Common myeloid progenitor, CD34-positive (primary cell): ENCODE measurements at regions of chr2 and their contacts with region 1.

Region 1: DNA sequence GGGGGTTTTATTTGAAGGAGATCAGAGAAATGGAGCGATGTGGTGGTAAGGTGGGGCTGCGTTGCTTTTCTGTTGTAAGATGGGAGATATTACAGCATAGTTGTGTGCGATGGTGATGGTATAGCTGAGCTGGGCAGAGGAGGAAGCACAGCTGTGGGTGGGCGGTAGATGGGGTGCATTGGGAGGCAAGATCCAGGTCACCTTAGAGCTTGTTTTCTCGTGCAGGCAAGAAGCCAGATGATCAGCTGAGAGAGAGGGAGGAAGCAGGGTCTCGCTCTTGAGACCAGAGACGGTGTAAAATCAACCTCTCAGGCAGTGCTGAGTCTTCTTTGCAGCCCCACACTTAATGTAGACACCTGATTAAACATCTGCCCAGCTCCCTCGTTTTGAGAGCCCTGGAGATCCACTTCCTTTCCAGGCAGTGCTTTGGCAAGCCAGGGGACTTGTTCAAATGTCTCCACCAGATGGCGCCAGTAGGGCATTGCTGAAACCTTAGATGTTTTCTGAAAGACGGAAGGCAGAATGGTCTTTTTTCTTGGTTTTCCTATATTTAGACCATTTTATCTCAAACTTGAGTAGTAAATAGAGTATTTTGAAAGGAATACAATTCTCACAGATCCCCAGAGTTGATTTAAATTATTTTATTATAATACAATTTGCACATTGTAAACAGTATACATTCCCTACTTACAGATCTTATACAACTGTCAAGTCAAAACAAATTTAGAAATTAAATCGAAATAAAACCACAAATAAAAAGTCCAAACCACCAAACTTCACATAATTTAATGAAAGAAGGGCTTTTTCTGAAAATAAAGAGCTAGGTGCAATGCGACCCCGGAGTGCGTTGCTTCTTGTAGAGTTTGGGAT is 21.1 kb upstream of the LYPD6B start:
- DNase-seq: peak; percentile 77 to 89 (median 83)
- H3K4me3 ChIP-seq: no peak overlapping the region
- H3K27ac ChIP-seq: no peak overlapping the region
- H3K4me1 ChIP-seq: peaks cover 0 to 4% (median 2%) of the 10 kb centered on the region in 4 experiments
- H3K27me3 ChIP-seq: peaks cover 0 to 6% (median 0%) of the 10 kb centered on the region in 5 experiments

Region 2: DNA sequence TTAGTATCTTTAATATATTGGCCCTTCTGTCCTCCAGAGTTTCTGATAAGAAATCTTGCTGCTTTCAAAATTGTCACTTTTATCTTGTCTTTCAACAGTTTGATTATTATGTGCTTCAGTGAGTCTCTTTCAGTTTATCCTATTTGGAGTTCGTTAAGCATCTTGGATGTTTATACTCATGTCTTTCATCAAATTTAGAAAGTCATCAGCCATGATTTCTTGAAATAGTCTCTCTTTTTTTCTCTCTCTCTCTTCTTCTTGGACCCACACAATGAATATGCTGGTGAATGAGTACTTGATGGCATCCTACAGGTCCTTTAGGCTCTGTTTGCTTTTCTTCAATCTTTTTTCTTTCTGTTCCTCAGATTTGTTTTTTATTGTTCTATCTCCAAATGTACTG is 169.2 kb before region 1 on chr2:
- CTCF ChIA-PET with region 1: no interaction called
- POLR2A ChIA-PET with region 1: no interaction called
- DNase-seq: no peak
- H3K4me3 ChIP-seq: no peak overlapping the region
- H3K27ac ChIP-seq: no peak overlapping the region
- H3K4me1 ChIP-seq: no peaks in the 10 kb centered on the region
- H3K27me3 ChIP-seq: peaks cover 0 to 3% (median 0%) of the 10 kb centered on the region in 5 experiments

Region 3: GRCh38 chr2:149006883-149007540 is 10.3 kb before region 1 on chr2:
- CTCF ChIA-PET with region 1: interaction called, 10 read pairs
- POLR2A ChIA-PET with region 1: no interaction called
- DNase-seq: no peak
- H3K4me3 ChIP-seq: no peak overlapping the region
- H3K27ac ChIP-seq: no peak overlapping the region
- H3K4me1 ChIP-seq: peaks cover 0 to 8% (median 0%) of the 10 kb centered on the region in 4 experiments
- H3K27me3 ChIP-seq: peaks cover 0 to 6% (median 0%) of the 10 kb centered on the region in 5 experiments

Region 4: DNA sequence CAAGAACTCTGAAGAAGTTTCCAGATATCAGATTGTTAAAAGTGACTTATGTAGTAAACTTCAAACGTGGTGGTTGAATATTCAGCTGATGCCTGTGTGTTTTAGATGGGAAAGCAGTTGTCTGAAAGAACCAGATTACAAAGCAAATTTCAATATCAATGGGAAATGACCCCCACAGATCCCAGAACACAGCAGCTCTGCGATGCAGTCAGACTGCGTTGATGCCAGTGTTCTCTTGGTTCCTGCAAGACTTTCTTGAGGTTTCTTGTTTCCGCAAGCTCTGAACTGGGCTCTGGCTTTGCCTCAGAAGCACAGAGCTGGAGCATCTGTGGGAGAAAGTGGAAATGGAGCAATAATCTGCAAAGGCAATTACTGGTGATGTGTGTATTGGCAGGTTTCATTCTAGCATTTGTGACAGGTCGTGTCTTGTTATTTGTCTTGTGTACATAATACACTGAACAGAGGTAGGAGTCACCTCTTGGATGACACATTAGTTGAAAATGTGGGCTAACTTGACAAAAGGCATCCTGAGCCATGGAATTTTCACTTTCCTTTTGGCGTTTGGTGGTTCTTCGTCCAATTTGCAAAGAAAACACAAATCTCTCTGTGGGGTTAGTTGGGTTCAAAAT is 10.4 kb after region 1 on chr2:
- CTCF ChIA-PET with region 1: interaction called, 48 read pairs
- POLR2A ChIA-PET with region 1: no interaction called
- DNase-seq: no peak
- H3K4me3 ChIP-seq: no peak overlapping the region
- H3K27ac ChIP-seq: no peak overlapping the region
- H3K4me1 ChIP-seq: peaks cover 0 to 4% (median 2%) of the 10 kb centered on the region in 4 experiments
- H3K27me3 ChIP-seq: peaks cover 0 to 3% (median 0%) of the 10 kb centered on the region in 5 experiments

Region 5: GRCh38 chr2:149038442-149039212 is 21.3 kb after region 1 on chr2 and contains the start of gene LYPD6B:
- CTCF ChIA-PET with region 1: interaction called, 12 read pairs
- POLR2A ChIA-PET with region 1: no interaction called
- DNase-seq: peak; percentile 8 to 58 (median 31)
- H3K4me3 ChIP-seq: peak within 1 kb of the TSS in 6 of 7 experiments; percentile 13 to 68 (median 54)
- H3K27ac ChIP-seq: no peak within 1 kb of the TSS
- H3K4me1 ChIP-seq: peaks cover 0 to 15% (median 11%) of the 10 kb centered on the region in 4 experiments
- H3K27me3 ChIP-seq: peaks cover 0 to 30% (median 19%) of the 10 kb centered on the region in 5 experiments

Region 6: DNA sequence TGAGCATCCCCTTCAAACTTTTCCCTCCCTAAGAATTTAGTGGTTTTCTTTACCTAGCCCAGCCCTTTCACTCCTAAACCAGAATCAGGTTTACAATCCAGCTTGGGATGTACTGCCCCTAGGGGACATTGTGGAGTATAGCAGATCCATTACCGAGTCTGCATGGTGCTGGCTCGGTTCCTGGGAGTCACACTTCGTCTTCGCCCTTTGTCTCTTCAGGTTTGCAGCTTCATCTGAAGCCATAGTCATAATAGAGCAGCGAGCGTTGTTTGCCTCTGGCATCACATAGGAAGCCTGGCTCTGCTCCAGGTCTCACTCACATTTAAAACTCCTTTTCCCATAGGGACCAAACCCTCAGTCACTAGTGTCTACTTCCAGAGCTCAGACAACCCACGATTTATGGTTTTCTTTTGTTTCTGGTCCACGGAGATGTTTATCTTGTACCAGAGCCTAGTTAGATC is 296.2 kb after region 1 on chr2:
- CTCF ChIA-PET with region 1: interaction called, 55 read pairs
- POLR2A ChIA-PET with region 1: no interaction called
- DNase-seq: peak; percentile 32 to 62 (median 54)
- H3K4me3 ChIP-seq: peak overlapping the region in 1 of 7 experiments; percentile 4
- H3K27ac ChIP-seq: no peak overlapping the region
- H3K4me1 ChIP-seq: peaks cover 0 to 3% (median 0%) of the 10 kb centered on the region in 4 experiments
- H3K27me3 ChIP-seq: peaks cover 0 to 5% (median 3%) of the 10 kb centered on the region in 5 experiments

Region 7: GRCh38 chr2:149561309-149561926 is 544.1 kb after region 1 on chr2:
- CTCF ChIA-PET with region 1: interaction called, 62 read pairs
- POLR2A ChIA-PET with region 1: no interaction called
- DNase-seq: peak; percentile 36 to 53 (median 42)
- H3K4me3 ChIP-seq: no peak overlapping the region
- H3K27ac ChIP-seq: no peak overlapping the region
- H3K4me1 ChIP-seq: peaks cover 0 to 5% (median 0%) of the 10 kb centered on the region in 4 experiments
- H3K27me3 ChIP-seq: no peaks in the 10 kb centered on the region

Region 8: GRCh38 chr2:149573760-149574159 is 556.4 kb after region 1 on chr2:
- CTCF ChIA-PET with region 1: interaction called, 28 read pairs
- POLR2A ChIA-PET with region 1: no interaction called
- DNase-seq: peak in 2 of 3 donors; percentile 39 to 46
- H3K4me3 ChIP-seq: no peak overlapping the region
- H3K27ac ChIP-seq: no peak overlapping the region
- H3K4me1 ChIP-seq: no peaks in the 10 kb centered on the region
- H3K27me3 ChIP-seq: no peaks in the 10 kb centered on the region